Activated CD8-positive, alpha-beta T cell treated with anti-CD3 and anti-CD28 coated beads, Interleukin-2, amount 10 ng/mL, durations not matched to agents 7 days and 5 days (primary cell): ENCODE measurements at regions of chr5 and their contacts with region 1.

Region 1: DNA sequence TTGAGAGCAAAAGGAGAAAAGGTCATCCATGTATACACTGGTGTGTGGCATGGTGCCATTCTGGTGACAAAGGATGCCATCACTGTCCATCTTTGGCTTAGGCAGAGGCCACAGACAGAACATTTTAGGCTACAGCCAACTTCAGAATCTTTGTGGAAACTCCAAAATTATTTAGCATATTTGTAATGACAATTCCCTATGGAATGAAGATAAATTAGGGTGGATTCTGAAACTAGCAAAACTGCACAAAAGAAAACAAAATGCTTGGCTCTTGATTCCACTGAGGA is 92.5 kb downstream of the FBXW11 start:
- DNase-seq: no peak
- ATAC-seq: no peak
- H3K4me3 Mint-ChIP-seq: no peak overlapping the region
- H3K27ac Mint-ChIP-seq: no peak overlapping the region
- H3K4me1 Mint-ChIP-seq: peaks cover 23% of the 10 kb centered on the region
- H3K27me3 Mint-ChIP-seq: no peaks in the 10 kb centered on the region

Region 2: GRCh38 chr5:171418316-171418981 is 495.5 kb before region 1 on chr5:
- CTCF ChIA-PET with region 1: interaction called, 30 read pairs
- POLR2A ChIA-PET with region 1: no interaction called
- DNase-seq: peak; percentile 72
- ATAC-seq: peak; percentile 63
- H3K4me3 Mint-ChIP-seq: peak overlapping the region; percentile 63
- H3K27ac Mint-ChIP-seq: no peak overlapping the region
- H3K4me1 Mint-ChIP-seq: peaks cover 17% of the 10 kb centered on the region
- H3K27me3 Mint-ChIP-seq: peaks cover 24% of the 10 kb centered on the region

Region 3: GRCh38 chr5:171644536-171644935 is 269.4 kb before region 1 on chr5:
- CTCF ChIA-PET with region 1: no interaction called
- POLR2A ChIA-PET with region 1: no interaction called
- DNase-seq: no peak
- ATAC-seq: no peak
- H3K4me3 Mint-ChIP-seq: no peak overlapping the region
- H3K27ac Mint-ChIP-seq: no peak overlapping the region
- H3K4me1 Mint-ChIP-seq: no peaks in the 10 kb centered on the region
- H3K27me3 Mint-ChIP-seq: peaks cover under 1% of the 10 kb centered on the region

Region 4: GRCh38 chr5:171961117-171961516 is 47.2 kb after region 1 on chr5:
- CTCF ChIA-PET with region 1: interaction called, 10 read pairs
- POLR2A ChIA-PET with region 1: no interaction called
- DNase-seq: peak; percentile 24
- ATAC-seq: peak; percentile 63
- H3K4me3 Mint-ChIP-seq: no peak overlapping the region
- H3K27ac Mint-ChIP-seq: peak overlapping the region; percentile 39
- H3K4me1 Mint-ChIP-seq: peaks cover 63% of the 10 kb centered on the region
- H3K27me3 Mint-ChIP-seq: no peaks in the 10 kb centered on the region

Region 5: DNA sequence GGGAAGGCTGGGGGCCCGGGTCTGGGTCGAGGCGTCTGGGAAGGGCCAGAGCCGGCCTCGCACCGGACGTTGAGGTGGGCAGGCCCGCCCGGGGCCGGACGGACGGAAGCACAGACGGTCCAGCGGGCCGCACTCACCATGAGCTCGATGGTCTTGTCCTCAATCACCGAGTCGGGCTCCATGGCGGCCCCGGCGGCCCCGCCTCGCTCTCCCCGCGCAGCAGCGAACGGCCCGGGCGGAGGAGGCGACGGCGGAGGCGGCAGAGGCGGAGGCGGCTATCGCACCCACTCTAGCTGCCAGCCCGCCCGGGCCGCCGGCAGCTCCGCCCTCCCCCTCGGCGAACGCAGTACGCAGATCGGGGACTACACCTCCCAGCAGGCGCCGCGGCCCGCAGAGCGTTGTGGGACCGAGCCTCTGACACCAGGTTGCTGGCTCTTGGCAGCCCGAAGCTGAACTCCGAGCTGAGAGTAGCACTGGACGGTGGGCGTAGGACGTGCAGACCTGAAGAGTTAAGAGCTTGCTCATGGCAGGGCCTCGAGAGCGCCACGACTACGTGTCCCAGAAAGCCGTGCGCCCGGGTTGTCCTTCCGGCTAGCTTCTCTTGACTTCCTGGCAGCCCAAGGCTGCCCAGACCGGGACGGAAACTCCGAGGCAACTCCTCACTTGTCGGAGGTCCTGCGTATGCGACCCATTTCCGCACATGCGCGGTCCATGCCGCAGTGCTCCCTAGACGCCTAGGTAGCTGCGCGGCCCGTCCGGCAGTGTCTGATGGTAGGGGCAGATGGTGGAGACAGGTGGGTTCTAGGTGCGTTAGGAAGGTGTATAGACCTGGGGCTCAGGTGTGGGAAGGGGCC is 92.6 kb after region 1 on chr5 and contains the start of gene FBXW11:
- CTCF ChIA-PET with region 1: interaction called, 79 read pairs
- POLR2A ChIA-PET with region 1: interaction called, 5 read pairs
- DNase-seq: peak; percentile 97
- ATAC-seq: peak; percentile 90
- H3K4me3 Mint-ChIP-seq: peak within 1 kb of the TSS; percentile 86
- H3K27ac Mint-ChIP-seq: peak within 1 kb of the TSS; percentile 96
- H3K4me1 Mint-ChIP-seq: peaks cover 47% of the 10 kb centered on the region
- H3K27me3 Mint-ChIP-seq: no peaks in the 10 kb centered on the region
- total RNA-seq, gene FBXW11: 26.3 to 27.1 TPM

Region 6: GRCh38 chr5:172044631-172045314 is 130.8 kb after region 1 on chr5:
- CTCF ChIA-PET with region 1: interaction called, 80 read pairs
- POLR2A ChIA-PET with region 1: interaction called, 3 read pairs
- DNase-seq: no peak
- ATAC-seq: no peak
- H3K4me3 Mint-ChIP-seq: no peak overlapping the region
- H3K27ac Mint-ChIP-seq: peak overlapping the region; percentile 63
- H3K4me1 Mint-ChIP-seq: peaks cover 2% of the 10 kb centered on the region
- H3K27me3 Mint-ChIP-seq: no peaks in the 10 kb centered on the region

Region 7: DNA sequence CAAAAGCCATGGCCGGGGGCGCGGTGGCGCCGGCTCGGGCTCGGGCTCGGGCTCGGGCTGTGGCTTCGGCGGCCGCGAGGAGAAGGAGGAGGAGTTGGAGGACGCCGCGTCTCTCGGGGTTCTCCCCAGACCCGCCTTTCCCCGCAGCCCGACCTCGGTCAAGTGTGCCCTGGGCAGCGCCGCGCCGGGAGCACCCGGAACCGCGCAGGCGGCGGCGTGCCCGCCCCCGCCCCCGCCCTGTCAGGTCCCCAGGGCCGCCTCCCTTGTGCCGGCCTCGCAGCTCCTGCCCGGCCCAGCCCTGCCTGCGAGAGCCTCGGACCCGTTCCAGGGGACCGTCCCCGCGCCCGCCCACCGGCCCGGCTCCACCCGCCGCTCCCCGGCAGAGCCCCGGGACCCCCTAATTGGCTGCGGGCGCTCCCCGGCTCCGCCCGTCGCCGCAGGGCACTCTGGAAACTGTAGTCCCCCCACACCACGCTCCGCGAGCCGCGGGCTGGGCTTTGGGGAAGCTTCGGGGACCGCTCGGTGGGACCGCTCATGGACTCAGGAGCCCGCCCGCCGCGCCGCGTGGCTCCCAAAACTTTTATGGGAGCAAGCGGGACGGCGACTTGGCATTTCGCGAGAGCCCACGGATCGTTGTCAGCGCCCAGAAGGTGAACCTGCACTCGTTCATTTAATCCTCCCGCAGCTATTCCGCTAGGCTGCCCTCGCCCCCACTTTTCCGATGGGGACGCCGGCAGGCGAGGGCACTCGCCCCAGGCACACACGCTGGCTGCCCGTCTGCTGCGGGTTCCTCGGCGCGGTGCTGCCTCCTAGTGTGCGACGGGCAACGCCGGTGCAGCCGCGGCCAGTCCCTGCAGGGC is 274.3 kb after region 1 on chr5 and contains the start of gene STK10:
- CTCF ChIA-PET with region 1: interaction called, 10 read pairs
- POLR2A ChIA-PET with region 1: interaction called, 3 read pairs
- DNase-seq: peak; percentile 93
- ATAC-seq: peak; percentile 78
- H3K4me3 Mint-ChIP-seq: peak within 1 kb of the TSS; percentile 100
- H3K27ac Mint-ChIP-seq: peak within 1 kb of the TSS; percentile 96
- H3K4me1 Mint-ChIP-seq: peaks cover 30% of the 10 kb centered on the region
- H3K27me3 Mint-ChIP-seq: no peaks in the 10 kb centered on the region
- total RNA-seq, gene STK10: 294 to 299 TPM

Region 8: DNA sequence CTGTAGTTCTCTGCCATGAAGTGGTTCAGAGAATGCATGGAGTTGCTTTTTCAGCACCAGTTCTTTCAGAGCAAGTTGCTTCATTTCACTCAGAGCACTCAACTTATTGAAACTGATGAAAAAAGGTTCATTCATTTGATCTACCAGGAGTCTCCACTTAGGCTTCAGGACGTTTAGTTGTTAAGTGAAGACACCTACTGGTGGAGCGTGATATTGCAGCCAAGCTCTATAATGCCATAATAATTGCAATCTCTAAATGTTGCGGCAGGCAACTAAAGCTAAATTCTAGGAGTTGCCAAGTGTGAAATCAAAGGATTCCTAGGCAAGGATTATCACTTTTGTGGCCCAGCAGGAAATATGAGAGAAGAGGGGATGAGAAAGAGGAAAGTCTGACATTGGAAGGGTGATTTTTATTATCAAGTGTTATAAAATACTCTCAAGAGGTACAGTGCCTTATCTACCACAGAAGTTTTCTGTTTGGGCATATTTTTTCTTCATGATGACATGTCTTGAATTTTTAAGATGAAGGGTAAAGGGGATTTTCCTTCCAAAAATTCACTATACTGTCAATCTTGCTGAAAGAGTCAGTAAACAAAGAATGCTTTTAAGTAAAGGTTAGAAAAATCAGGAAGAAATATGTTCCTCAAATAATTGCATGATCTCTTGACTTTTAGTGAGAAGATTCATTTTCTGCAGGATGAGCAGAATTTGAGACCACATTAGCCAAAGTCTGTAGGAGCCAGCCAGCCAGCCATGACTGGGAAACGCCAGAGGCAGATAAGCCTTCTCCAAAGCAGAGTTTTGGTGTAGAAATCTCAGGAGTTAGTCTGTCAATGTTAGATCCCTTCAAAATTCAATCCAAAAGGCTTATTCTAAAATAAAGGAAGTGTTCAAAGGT is 457.0 kb after region 1 on chr5:
- CTCF ChIA-PET with region 1: interaction called, 12 read pairs
- POLR2A ChIA-PET with region 1: no interaction called
- DNase-seq: peak; percentile 69
- ATAC-seq: no peak
- H3K4me3 Mint-ChIP-seq: no peak overlapping the region
- H3K27ac Mint-ChIP-seq: no peak overlapping the region
- H3K4me1 Mint-ChIP-seq: no peaks in the 10 kb centered on the region
- H3K27me3 Mint-ChIP-seq: peaks cover 3% of the 10 kb centered on the region